ENCODE measurements at regions of chr9 and their contacts with region 1.

Region 1: DNA sequence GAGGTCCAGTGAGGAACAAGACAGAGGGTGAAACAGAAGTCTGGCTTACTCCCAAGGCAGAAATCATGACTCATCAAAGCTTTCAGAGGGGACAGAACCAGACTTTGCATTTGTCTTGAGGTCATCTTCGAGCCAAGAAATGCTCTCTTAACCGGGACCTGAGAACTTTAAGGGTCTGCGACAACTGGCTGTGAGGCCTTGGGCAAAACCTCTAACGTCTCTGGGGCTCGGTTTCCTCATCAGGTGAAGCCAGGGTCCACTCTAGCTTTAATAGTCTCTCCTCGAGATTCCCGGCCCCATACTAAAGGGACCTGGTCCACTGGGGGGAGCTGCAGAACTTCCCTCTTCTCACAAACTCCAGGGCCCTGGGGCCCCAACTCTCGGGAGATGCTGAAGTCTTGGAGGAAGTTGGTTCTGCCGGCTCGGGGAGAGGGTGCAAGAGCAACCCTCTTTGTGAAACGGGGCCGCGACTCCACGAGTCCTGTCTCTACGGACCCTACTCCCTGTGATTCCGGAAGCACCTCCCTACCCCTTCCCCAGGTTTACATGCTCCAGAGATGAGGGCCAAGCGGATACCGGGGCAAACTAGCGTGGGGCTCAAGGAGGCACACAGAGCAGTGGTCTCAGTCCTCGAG is 2.6 kb downstream of the GLIS3 start:
- DNase-seq: peak; percentile 80
- H3K4me3 Mint-ChIP-seq: peak overlapping the region; percentile 86
- H3K27ac Mint-ChIP-seq: peak overlapping the region; percentile 86
- H3K4me1 Mint-ChIP-seq: peaks cover 42% of the 10 kb centered on the region
- H3K27me3 Mint-ChIP-seq: peaks cover 7% of the 10 kb centered on the region

Region 2: GRCh38 chr9:3385871-3386270 is 911.4 kb before region 1 on chr9:
- CTCF ChIA-PET with region 1: no interaction called
- intact Hi-C with region 1: loop called (anchors 5 kb)
- DNase-seq: peak; percentile 75
- H3K4me3 Mint-ChIP-seq: no peak overlapping the region
- H3K27ac Mint-ChIP-seq: peak overlapping the region; percentile 56
- H3K4me1 Mint-ChIP-seq: peaks cover 49% of the 10 kb centered on the region
- H3K27me3 Mint-ChIP-seq: no peaks in the 10 kb centered on the region

Region 3: GRCh38 chr9:3931996-3932906 is 365.0 kb before region 1 on chr9:
- CTCF ChIA-PET with region 1: no interaction called
- intact Hi-C with region 1: loop called (anchors 5 kb)
- DNase-seq: no peak
- H3K4me3 Mint-ChIP-seq: no peak overlapping the region
- H3K27ac Mint-ChIP-seq: peak overlapping the region; percentile 73
- H3K4me1 Mint-ChIP-seq: peaks cover 22% of the 10 kb centered on the region
- H3K27me3 Mint-ChIP-seq: peaks cover 2% of the 10 kb centered on the region

Region 4: DNA sequence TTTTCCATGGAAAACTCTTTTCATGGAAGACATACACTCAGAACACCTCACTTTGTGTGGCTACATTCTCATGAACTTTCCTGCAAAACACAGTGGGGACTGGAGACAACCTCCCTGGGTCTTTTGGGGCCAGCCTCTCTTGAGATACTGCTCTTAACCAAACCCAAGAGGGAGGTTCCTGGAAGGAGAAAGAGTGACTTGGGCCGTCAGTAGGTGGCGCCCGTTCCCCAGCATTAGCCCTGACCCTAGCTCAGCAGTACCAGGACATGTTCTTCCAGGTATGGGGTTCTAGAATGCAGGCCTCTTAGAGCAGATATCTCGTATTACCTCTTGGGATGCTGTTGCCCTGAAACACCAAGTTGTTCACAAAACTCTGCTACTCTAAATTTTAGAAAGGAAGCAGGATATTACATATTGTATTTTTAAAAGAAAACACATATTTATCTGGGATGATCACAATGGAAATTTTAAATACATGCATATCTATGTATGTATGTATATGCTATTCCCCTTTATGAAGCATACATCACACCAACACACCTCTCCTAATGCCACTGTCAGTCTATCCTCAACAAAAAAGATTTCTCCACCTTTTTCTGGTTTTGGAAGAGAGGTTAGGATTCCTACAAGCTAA is 18.4 kb after region 1 on chr9:
- CTCF ChIA-PET with region 1: interaction called, 48 read pairs
- intact Hi-C with region 1: loop called (anchors 2 kb)
- DNase-seq: peak; percentile 89
- H3K4me3 Mint-ChIP-seq: no peak overlapping the region
- H3K27ac Mint-ChIP-seq: no peak overlapping the region
- H3K4me1 Mint-ChIP-seq: peaks cover 2% of the 10 kb centered on the region
- H3K27me3 Mint-ChIP-seq: no peaks in the 10 kb centered on the region

Region 5: DNA sequence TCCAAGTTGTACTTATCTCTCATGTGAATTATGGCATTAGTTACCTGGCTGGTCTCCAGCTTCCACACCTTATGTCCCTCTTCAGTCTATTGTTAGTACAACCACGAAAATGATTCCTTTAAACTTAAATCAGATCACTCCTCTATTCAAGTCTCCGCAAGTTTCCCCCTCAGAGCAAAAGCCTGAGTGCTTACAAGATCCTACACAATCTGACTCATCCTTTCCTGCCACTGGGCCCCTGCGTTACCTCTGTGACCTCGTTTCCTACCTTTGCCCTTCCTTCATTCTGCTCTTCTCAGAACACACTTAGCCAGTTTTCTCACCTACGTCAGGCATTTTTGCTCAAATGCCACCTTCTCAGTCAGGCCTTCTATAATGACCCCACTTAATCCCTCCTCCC is 47.7 kb after region 1 on chr9:
- CTCF ChIA-PET with region 1: interaction called, 6 read pairs
- intact Hi-C with region 1: loop called (anchors 1 kb)
- DNase-seq: peak; percentile 82
- H3K4me3 Mint-ChIP-seq: peak overlapping the region; percentile 28
- H3K27ac Mint-ChIP-seq: peak overlapping the region; percentile 43
- H3K4me1 Mint-ChIP-seq: peaks cover 17% of the 10 kb centered on the region
- H3K27me3 Mint-ChIP-seq: no peaks in the 10 kb centered on the region

Region 6: GRCh38 chr9:4740638-4741364 is 443.5 kb after region 1 on chr9 and contains the start of gene AK3:
- CTCF ChIA-PET with region 1: no interaction called
- intact Hi-C with region 1: no loop called
- DNase-seq: peak; percentile 90
- H3K4me3 Mint-ChIP-seq: peak within 1 kb of the TSS; percentile 91
- H3K27ac Mint-ChIP-seq: peak within 1 kb of the TSS; percentile 89
- H3K4me1 Mint-ChIP-seq: peaks cover 55% of the 10 kb centered on the region
- H3K27me3 Mint-ChIP-seq: no peaks in the 10 kb centered on the region
- total RNA-seq, gene AK3: 50.2 to 50.9 TPM

Region 7: DNA sequence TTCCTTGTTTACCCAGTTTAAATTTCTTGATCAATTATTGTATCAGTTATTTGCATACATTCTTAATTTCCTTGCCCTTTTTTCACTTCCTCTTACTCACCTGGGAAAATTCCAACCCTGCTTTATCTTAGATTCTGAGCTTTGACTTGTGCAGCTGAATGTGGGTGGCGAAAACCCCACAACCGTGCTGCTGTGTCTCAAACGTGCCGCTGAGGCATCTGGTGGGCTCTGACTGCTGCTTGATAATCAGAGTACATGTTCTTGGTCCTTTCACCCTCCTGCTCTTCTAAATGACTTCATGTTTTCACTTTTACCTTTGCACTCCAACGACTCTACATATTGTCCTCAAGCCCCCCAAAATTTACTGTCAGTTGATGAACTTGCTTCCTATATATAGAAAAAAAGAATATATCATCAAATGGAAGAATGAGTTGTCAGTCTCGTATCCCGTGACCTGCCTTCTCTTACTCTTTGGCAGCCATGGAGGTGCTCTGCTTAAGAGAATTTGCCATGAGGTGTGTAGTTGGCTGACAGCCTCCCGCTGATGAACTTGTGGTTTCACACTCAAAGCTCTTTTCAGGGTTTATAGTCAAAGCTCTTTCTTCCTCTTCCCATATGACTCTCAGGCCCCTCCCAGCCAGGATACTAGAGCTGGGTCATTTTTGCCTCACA is 673.8 kb after region 1 on chr9:
- CTCF ChIA-PET with region 1: interaction called, 5 read pairs
- intact Hi-C with region 1: loop called (anchors 5 kb)
- DNase-seq: peak; percentile 91
- H3K4me3 Mint-ChIP-seq: no peak overlapping the region
- H3K27ac Mint-ChIP-seq: no peak overlapping the region
- H3K4me1 Mint-ChIP-seq: peaks cover 23% of the 10 kb centered on the region
- H3K27me3 Mint-ChIP-seq: no peaks in the 10 kb centered on the region

Measured in activated naive CD4-positive, alpha-beta T cell treated with anti-CD3 and anti-CD28 coated beads for 36 hours (primary cell).